Posterior cingulate gyrus (tissue), 11 donors: ENCODE measurements at regions of chr16 and their contacts with region 1.

Region 1: DNA sequence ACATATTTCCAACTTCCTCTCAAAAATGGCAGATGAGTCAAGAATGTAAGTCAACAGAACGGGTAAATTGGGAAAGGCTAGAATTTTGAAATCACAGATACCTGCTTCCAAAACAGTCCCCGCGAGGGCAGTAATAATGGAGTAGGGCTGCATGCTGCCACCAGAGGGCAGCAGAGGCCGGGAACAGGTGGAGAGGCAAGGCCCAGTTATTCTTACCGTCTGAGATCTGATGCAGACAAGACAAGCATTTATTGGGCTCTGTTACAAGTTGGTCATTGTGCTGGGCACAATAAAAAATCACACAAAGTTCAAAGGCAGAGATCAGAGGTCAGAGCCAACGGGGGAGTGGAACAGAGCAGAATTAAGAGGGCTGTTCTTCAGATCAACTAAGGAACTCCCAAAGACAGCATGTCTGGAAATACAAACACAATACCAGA is 8.8 kb upstream of the MLKL start:
- DNase-seq: peak; percentile 78 to 98 (median 90)

Region 2: DNA sequence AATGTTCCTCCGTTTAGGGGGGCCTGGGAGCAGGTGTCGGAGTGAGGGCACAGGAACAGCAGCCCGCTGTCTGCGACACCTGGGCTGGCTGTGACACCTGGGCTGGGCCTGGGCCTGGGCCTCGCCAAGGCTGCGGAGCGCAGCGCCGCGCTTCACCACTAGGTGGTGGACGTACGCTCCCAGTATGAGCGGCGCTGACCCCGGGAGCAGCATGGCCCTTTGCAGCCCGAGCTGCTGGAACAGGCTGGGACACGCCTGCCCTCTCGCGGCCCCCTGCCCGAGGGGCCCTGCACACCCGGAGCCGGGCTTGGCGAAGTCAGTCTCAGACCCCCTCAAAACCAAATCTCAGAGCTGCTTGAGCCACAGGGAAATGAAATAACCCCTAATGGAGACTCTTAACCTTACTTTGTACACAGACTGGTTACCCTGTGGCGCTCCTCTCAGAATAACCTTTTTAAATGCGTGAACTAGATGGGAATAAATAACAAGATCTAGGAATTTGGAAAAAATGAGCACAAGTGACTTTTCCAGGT is 103.7 kb after region 1 on chr16:
- intact Hi-C with region 1: loop called (anchors 1 kb)
- DNase-seq: peak; percentile 43 to 96 (median 74)

Region 3: DNA sequence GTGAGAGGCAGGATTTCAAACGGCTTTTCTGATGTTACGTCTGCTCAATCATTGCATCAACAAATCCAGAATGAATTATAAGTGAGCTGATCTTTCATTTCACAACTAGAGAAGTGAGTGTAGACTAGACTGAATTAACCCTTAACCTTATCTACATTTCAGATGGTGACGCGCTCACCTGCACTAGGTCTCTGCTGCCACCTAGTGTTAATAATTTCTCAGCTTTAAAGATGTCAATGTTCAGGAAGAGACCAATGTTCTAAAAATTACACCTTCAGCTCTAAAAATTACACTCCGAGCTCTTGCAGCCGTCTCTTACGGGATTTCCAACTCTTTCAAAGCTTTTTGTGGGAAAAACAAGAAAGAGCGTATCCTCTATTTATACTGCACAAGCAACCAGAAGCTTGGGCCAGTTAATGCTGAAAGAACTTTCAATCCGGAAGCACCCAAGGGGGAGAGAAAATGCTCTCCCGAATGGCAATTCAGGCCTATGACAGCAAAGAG is 153.3 kb after region 1 on chr16:
- intact Hi-C with region 1: loop called (anchors 2 kb)
- DNase-seq: peak in 1 of 10 donors; percentile 15

Region 4: GRCh38 chr16:74998481-74999218 is 289.2 kb after region 1 on chr16 and contains the start of gene ZNRF1:
- intact Hi-C with region 1: loop called (anchors 10 kb)
- DNase-seq: peak; percentile 64 to 94 (median 74)